ENCODE measurements at regions of chr11 and their contacts with region 1.

Region 1: DNA sequence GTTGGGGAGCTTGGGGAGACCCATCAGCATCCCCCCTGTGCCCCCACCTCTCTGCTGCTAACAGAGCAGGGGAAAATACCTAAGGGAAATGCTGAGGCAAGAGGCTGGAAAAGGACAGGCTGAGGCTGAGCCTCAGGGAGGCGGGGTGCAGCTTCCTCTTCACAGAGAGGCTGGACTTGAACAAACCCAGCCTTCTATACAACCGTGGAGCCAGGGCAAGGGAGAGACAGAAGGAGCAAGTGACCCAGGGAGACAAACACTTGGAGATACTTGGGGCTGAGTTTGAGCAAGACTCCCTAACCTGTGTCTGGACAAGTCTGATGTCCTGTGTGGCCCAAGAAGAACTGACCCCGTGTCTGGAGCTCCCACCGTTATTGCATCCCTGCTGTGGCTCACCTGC is at the start of gene SLCO2B1:
- DNase-seq: no peak
- ATAC-seq: peak in 7 of 8 donors; percentile 51 to 79 (median 64)
- H3K4me3 ChIP-seq: peak within 1 kb of the TSS; percentile 12 to 62 (median 52)
- H3K27ac ChIP-seq: peak within 1 kb of the TSS in 9 of 10 donors; percentile 38 to 91 (median 76)
- H3K4me1 ChIP-seq: peaks cover 0 to 76% (median 50%) of the 10 kb centered on the region in 9 donors
- H3K27me3 ChIP-seq: no peaks in the 10 kb centered on the region
- CTCF ChIP-seq: no peak
- total RNA-seq, gene SLCO2B1: 10.7 to 69.0 (median 18.0) TPM

Region 2: GRCh38 chr11:75188671-75189070 is 37.8 kb after region 1 on chr11:
- intact Hi-C with region 1: loop called in 1 of 10 experiments (anchors 5 kb)
- DNase-seq: no peak
- ATAC-seq: peak in 6 of 8 donors; percentile 22 to 53 (median 38)
- H3K4me3 ChIP-seq: no peak overlapping the region
- H3K27ac ChIP-seq: peak overlapping the region in 2 of 10 donors; percentile 26 to 78
- H3K4me1 ChIP-seq: peaks cover under 1 to 70% (median 23%) of the 10 kb centered on the region in 9 donors
- H3K27me3 ChIP-seq: no peaks in the 10 kb centered on the region
- CTCF ChIP-seq: no peak

Region 3: DNA sequence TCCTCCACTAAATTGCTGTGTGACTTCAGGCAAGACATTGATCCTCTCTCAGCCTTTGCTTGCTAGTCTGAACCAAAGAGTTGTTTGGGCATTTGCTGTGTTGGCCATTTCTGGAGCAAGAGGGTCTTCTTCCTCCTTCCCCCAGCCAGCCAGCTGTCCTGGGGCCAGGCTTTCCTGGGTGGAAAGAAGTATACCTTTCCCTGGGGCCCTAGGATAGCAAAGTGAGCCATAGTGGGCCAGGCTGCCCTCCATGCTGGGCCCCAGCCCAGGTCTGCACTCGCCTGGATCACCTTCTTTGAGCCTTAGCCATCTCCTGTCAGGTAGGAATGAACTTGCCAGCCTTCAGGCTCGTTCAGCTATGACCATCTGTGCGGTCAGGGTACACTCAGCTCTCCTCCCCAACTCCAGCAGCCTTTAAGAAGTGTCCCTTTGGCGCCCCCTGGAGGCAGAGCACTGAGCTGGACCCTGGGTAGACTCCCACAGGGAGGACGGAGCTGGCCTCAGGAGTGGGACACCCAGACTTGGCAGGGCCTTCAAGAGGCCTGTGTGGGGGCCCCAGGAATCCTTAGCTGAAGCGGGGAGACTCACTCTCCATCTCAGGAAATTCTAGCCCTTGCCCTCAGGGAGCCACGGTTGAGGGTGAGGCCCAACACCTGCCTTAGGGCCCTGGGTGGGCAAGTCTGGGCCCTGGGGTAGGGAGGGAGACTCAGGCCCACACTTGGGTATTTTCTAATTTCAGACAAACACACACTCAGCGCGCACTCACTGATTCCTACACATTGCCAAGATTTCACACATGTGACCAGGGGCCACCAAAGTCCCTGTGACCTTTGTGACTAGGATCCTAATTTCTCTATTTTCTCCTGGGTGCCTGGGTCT is 54.0 kb after region 1 on chr11:
- intact Hi-C with region 1: loop called in 1 of 10 experiments (anchors 2 kb)
- DNase-seq: peak; percentile 89 to 90
- ATAC-seq: peak; percentile 93 to 97 (median 96)
- H3K4me3 ChIP-seq: no peak overlapping the region
- H3K27ac ChIP-seq: peak overlapping the region in 2 of 10 donors; percentile 9 to 48
- H3K4me1 ChIP-seq: peaks cover 0 to 12% (median 3%) of the 10 kb centered on the region in 9 donors
- H3K27me3 ChIP-seq: peaks cover 0 to 3% (median 0%) of the 10 kb centered on the region in 7 donors
- CTCF ChIP-seq: peak; percentile 84 to 95 (median 93)